ENCODE measurements at regions of chr11 and their contacts with region 1.

Region 1: GRCh38 chr11:125091247-125091876 is 20.1 kb downstream of the TMEM218 start:
- DNase-seq: peak; percentile 45
- CTCF ChIP-seq: peak; percentile 51

Region 2: GRCh38 chr11:125079151-125079877 is 12.0 kb before region 1 on chr11:
- CTCF ChIA-PET with region 1: interaction called, 11 read pairs
- POLR2A ChIA-PET with region 1: no interaction called
- DNase-seq: peak; percentile 11
- CTCF ChIP-seq: no peak

Region 3: DNA sequence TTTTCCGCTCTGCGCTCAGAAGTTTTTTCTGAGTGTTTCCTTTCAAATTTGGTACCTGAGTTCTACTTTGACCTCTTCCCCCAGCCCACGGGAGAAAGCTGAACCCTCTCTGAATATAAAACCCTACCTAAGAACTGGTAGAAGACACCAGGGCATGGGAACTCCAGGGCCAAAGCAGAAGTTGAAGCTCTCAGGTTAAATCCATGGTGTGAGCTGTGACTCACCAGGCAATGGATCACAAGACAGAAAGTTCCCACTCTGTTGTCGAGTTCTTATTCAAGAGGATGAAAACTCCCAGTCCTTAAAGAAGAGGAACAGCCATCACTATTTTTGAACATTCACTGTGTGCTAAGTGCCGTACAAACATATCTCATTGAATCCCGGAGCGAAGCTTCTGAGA is 11.1 kb after region 1 on chr11:
- CTCF ChIA-PET with region 1: interaction called, 12 read pairs
- POLR2A ChIA-PET with region 1: no interaction called
- DNase-seq: peak; percentile 20
- CTCF ChIP-seq: no peak

Region 4: GRCh38 chr11:125111343-125112207 is 20.2 kb after region 1 on chr11 and contains the start of gene TMEM218:
- CTCF ChIA-PET with region 1: interaction called, 34 read pairs
- POLR2A ChIA-PET with region 1: no interaction called
- DNase-seq: peak; percentile 95
- CTCF ChIP-seq: no peak

Region 5: DNA sequence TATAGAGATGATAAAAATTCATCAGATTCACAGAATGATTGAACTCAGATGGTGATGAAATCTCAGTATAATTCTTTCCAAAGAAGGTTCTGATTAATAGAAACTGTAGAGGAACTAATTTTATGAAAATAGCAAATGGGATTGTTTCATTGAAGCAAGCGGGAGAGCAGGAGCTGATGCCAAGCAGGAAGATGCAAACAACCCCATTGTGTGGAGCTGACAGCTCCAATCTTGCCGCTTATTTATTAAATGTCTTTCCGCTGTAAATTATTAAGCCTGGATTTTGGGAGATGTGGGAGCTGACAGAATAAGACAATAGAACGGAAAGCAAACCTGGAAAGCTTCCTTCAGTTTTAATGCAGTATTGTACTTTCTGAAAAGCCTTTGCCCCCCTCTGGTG is 26.1 kb after region 1 on chr11:
- CTCF ChIA-PET with region 1: interaction called, 34 read pairs
- POLR2A ChIA-PET with region 1: no interaction called
- DNase-seq: no peak
- CTCF ChIP-seq: no peak

Region 6: DNA sequence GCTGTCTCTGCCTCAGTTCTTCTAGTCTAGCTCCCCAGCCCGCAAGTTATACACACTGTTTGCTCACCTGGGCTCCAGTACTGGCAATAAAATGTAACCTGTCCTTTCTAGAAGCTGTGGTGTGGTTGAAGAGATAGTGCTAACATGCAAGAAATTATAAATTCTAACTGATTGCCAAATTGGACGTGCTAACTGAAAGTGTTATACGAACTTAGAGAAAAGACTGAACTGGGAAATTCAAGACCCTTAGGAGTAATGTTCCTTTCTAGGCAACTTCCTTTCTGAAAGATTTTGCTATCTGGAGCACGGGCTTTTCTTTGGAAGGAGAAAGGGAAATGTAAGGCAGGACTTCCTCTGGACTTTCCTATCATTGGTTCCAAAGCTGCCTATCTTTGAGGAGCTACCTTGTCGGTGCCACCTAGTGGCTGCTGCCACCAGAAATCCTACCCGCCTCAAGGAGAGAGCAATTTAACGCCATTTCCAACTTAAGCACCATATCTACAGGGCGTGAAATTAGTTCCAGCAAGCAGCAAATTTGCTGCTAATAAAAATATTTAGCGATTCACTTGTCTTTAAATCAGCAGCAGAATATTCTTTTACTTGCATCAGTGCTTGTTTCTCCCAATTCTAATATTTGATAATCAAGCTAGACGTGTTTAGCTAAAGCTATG is 32.7 kb after region 1 on chr11:
- CTCF ChIA-PET with region 1: interaction called, 18 read pairs
- POLR2A ChIA-PET with region 1: no interaction called
- DNase-seq: peak; percentile 42
- CTCF ChIP-seq: peak; percentile 34

Measured in GM10248 (cell line).